ENCODE measurements at regions of chr21 and their contacts with region 1.

Region 1: GRCh38 chr21:19326531-19327319 is 923.1 kb upstream of the TMPRSS15 start:
- DNase-seq: no peak
- ATAC-seq: no peak
- H3K4me3 ChIP-seq: no peak overlapping the region
- H3K27ac ChIP-seq: no peak overlapping the region
- H3K4me1 ChIP-seq: no peaks in the 10 kb centered on the region
- H3K27me3 ChIP-seq: no peaks in the 10 kb centered on the region
- CTCF ChIP-seq: no peak
- EP300 ChIP-seq: no peak
- POLR2A ChIP-seq: no peak
- RAD21 ChIP-seq: no peak

Region 2: GRCh38 chr21:19034041-19034440 is 292.7 kb before region 1 on chr21:
- CTCF ChIA-PET with region 1: no interaction called
- POLR2A ChIA-PET with region 1: no interaction called
- in situ Hi-C with region 1: no loop called
- intact Hi-C with region 1: no loop called
- DNase-seq: no peak
- ATAC-seq: no peak
- H3K4me3 ChIP-seq: no peak overlapping the region
- H3K27ac ChIP-seq: no peak overlapping the region
- H3K4me1 ChIP-seq: no peaks in the 10 kb centered on the region
- H3K27me3 ChIP-seq: no peaks in the 10 kb centered on the region
- CTCF ChIP-seq: no peak
- EP300 ChIP-seq: no peak
- POLR2A ChIP-seq: no peak
- RAD21 ChIP-seq: no peak

Region 3: DNA sequence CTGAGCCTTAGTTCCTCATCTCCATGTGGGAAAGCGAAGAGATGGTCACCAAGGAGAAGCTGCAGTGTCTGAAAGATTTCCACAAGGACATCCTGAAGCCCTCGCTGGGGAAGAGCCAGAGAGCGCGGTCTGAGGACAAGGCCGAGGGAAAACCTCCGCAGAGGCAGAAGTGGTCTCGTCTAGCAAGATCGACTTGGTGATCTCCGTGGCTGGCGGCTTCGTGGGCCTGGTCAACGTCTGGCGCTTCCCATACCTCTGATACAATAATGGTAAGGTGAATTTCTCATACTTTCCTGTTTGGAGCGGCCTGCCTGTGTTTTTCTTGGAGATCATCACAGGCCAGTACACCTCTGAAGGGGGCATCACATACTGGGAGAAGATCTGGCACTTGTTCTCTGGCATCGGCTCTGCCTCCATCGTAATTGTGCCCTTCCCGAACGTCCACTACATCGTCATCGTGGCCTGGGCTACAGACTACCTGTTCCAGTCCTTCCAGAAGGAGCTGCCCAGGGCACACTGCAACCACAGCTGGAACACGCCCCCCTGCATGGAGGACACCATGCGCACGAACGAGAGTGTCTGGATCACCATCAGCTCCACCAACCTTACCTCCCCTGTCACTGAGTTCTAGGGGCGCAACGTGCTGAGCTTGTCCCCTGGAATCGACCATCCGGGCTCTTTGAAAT is 82.1 kb before region 1 on chr21:
- CTCF ChIA-PET with region 1: no interaction called
- POLR2A ChIA-PET with region 1: no interaction called
- in situ Hi-C with region 1: no loop called
- intact Hi-C with region 1: no loop called
- DNase-seq: no peak
- ATAC-seq: no peak
- H3K4me3 ChIP-seq: no peak overlapping the region
- H3K27ac ChIP-seq: no peak overlapping the region
- H3K4me1 ChIP-seq: no peaks in the 10 kb centered on the region; a peak in 1 of 5 replicates
- H3K27me3 ChIP-seq: no peaks in the 10 kb centered on the region
- CTCF ChIP-seq: no peak
- EP300 ChIP-seq: no peak
- POLR2A ChIP-seq: no peak
- RAD21 ChIP-seq: no peak

Region 4: DNA sequence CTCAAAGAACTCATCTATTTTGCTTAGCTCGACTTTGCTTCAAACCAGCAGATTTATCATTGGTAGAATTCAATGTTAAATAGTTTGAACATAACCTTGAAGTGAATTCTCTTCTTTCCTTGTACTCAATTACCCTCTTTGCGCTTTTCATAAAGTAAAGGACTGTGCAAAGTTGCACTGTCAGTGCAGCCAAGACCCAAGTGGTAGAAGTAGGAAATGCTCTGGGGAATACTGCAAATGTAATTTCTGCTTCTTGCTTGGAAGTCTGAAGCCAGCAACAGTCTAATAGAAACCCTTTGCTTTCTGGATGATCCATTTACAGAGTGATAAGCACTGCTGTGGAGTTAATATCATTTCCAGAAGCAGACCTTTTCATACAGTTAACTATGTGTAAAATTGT is 13.6 kb after region 1 on chr21:
- CTCF ChIA-PET with region 1: no interaction called
- POLR2A ChIA-PET with region 1: no interaction called
- in situ Hi-C with region 1: no loop called
- intact Hi-C with region 1: no loop called
- DNase-seq: no peak
- ATAC-seq: no peak
- H3K4me3 ChIP-seq: no peak overlapping the region
- H3K27ac ChIP-seq: no peak overlapping the region
- H3K4me1 ChIP-seq: no peaks in the 10 kb centered on the region
- H3K27me3 ChIP-seq: no peaks in the 10 kb centered on the region
- CTCF ChIP-seq: no peak
- EP300 ChIP-seq: no peak
- POLR2A ChIP-seq: no peak
- RAD21 ChIP-seq: no peak

Region 5: DNA sequence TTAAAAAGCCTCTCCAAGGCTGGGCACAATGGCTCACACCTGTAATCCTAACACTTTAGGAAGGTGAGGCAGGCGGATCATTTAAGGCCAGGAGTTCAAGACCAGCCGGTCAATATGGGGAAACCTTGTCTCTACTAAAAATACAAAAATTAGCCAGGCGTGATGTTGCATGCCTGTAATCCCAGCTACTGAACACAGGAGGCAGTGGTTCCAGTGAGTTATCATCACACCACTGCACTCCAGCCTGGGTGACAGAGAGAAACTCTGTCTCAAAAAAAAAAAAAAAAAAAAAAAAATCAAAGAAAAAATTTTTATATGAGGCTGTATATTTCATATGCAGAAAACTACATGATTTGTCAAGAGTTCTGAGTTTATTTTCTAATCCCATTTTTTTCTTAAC is 183.9 kb after region 1 on chr21:
- CTCF ChIA-PET with region 1: no interaction called
- POLR2A ChIA-PET with region 1: no interaction called
- in situ Hi-C with region 1: no loop called
- intact Hi-C with region 1: loop called (anchors 5 kb)
- DNase-seq: no peak
- ATAC-seq: peak; percentile 54; the same call in 2 of the 3 replicates
- H3K4me3 ChIP-seq: no peak overlapping the region
- H3K27ac ChIP-seq: no peak overlapping the region
- H3K4me1 ChIP-seq: no peaks in the 10 kb centered on the region
- H3K27me3 ChIP-seq: no peaks in the 10 kb centered on the region
- CTCF ChIP-seq: no peak
- EP300 ChIP-seq: no peak
- POLR2A ChIP-seq: no peak
- RAD21 ChIP-seq: no peak

Region 6: DNA sequence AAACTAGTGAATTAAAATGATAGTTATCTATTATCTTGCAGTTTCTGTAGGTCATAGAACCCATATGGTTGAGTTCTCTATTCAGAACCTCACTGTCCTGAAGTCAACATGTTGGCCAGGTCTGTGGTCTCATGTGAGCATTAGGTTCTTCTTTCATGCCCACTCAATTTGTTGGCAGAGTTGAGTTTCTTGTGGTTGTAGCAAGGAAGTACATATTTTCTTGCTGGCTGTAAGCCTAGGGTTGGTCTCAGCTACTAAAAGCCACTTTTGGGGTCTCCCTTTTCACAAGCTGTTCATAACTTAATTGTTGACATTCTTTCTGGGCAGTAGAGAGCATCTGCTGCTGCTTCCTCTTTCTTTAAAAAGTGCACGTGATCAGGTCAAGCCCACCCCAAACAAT is 506.4 kb after region 1 on chr21:
- CTCF ChIA-PET with region 1: no interaction called
- POLR2A ChIA-PET with region 1: no interaction called
- in situ Hi-C with region 1: no loop called
- intact Hi-C with region 1: no loop called
- DNase-seq: no peak
- ATAC-seq: no peak
- H3K4me3 ChIP-seq: no peak overlapping the region
- H3K27ac ChIP-seq: no peak overlapping the region
- H3K4me1 ChIP-seq: no peaks in the 10 kb centered on the region
- H3K27me3 ChIP-seq: no peaks in the 10 kb centered on the region
- CTCF ChIP-seq: no peak
- EP300 ChIP-seq: no peak
- POLR2A ChIP-seq: no peak
- RAD21 ChIP-seq: no peak